ENCODE measurements at regions of chr22 and their contacts with region 1.

Region 1: GRCh38 chr22:24525416-24526037 is 29.4 kb downstream of the GUCD1 start:
- DNase-seq: peak; percentile 45 to 83
- H3K4me3 ChIP-seq: no peak overlapping the region
- H3K4me1 ChIP-seq: no peaks in the 10 kb centered on the region
- H3K27me3 ChIP-seq: no peaks in the 10 kb centered on the region

Region 2: GRCh38 chr22:24325105-24325757 is 200.3 kb before region 1 on chr22:
- in situ Hi-C with region 1: loop called (anchors 10 kb)
- DNase-seq: peak in 1 of 2 experiments; percentile 43
- H3K4me3 ChIP-seq: no peak overlapping the region
- H3K4me1 ChIP-seq: no peaks in the 10 kb centered on the region
- H3K27me3 ChIP-seq: no peaks in the 10 kb centered on the region

Region 3: GRCh38 chr22:24410110-24410856 is 115.2 kb before region 1 on chr22:
- in situ Hi-C with region 1: loop called (anchors 10 kb)
- DNase-seq: no peak
- H3K4me3 ChIP-seq: no peak overlapping the region
- H3K4me1 ChIP-seq: no peaks in the 10 kb centered on the region
- H3K27me3 ChIP-seq: no peaks in the 10 kb centered on the region